IMR-90 (cell line): ENCODE measurements at regions of chr11 and their contacts with region 1.

Region 1: GRCh38 chr11:12411806-12412727 is 34.7 kb downstream of the PARVA start:
- DNase-seq: peak; percentile 95
- ATAC-seq: peak; percentile 80
- H3K4me3 ChIP-seq: peak overlapping the region; percentile 2; the same call in 1 of the 2 replicates
- H3K27ac ChIP-seq: peak overlapping the region; percentile 95
- H3K4me1 ChIP-seq: peaks cover 54% of the 10 kb centered on the region
- H3K27me3 ChIP-seq: no peaks in the 10 kb centered on the region
- CTCF ChIP-seq: peak; percentile 85
- POLR2A ChIP-seq: no peak
- RAD21 ChIP-seq: peak; percentile 84

Region 2: DNA sequence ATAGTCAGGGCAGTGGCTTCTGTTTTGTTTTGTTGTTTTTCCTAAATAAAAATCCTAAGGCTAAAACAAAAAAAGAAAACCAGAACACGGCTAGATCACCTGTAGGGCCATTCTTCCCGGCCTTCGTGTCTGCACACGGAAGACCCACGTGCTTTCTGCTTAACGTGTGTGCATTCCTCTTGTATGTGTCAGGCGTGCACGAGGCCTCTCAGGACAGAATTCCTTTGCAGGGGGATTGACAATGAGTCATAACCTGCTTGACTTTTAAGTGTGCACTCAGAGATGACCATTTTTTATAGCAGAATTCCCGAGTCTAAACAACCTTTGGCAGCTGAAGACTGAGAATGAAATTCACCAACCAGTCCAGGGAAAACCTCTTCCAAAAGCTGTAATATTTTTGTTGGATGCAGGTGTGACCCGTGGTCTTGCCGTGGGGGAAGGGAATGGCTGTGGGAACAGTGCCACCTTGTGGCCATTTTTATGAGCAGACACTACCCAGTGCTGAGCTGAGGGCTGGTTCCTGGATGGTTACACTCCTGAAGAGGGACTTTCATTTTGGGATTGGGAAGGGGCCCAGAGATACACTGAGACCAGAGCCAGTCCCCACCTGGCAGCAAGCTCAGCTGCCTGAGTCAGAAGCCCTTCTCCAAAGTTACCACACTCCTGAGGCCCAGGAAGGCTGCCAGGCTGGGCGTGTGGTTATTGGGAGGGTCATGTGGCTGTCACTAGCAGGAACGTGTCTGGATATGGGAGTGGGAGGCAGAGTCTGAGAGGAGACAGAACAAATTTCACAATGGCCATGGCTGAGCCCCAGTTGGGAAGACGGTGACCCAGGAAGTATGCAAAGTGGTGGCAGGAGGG is 367.9 kb before region 1 on chr11:
- CTCF ChIA-PET with region 1: no interaction called
- POLR2A ChIA-PET with region 1: no interaction called
- dilution Hi-C with region 1: no loop called
- in situ Hi-C with region 1: no loop called
- intact Hi-C with region 1: no loop called
- DNase-seq: peak; percentile 100
- ATAC-seq: peak; percentile 75
- H3K4me3 ChIP-seq: 0 out of 2 replicates have a peak overlapping the region, but pooled peaks have one; percentile 2
- H3K27ac ChIP-seq: peak overlapping the region; percentile 88
- H3K4me1 ChIP-seq: peaks cover 22% of the 10 kb centered on the region
- H3K27me3 ChIP-seq: no peaks in the 10 kb centered on the region
- CTCF ChIP-seq: peak; percentile 90
- POLR2A ChIP-seq: peak; percentile 50; the same call in 1 of the 2 replicates
- RAD21 ChIP-seq: peak; percentile 93

Region 3: GRCh38 chr11:12397931-12398334 is 14.1 kb before region 1 on chr11:
- CTCF ChIA-PET with region 1: interaction called, 4 read pairs
- POLR2A ChIA-PET with region 1: no interaction called
- dilution Hi-C with region 1: no loop called
- in situ Hi-C with region 1: no loop called
- intact Hi-C with region 1: loop called (anchors 1 kb)
- DNase-seq: peak; percentile 99
- ATAC-seq: peak; percentile 93
- H3K4me3 ChIP-seq: no peak overlapping the region
- H3K27ac ChIP-seq: peak overlapping the region; percentile 68
- H3K4me1 ChIP-seq: peaks cover 26% of the 10 kb centered on the region
- H3K27me3 ChIP-seq: no peaks in the 10 kb centered on the region
- CTCF ChIP-seq: no peak
- POLR2A ChIP-seq: no peak; the same call in 1 of the 2 replicates
- RAD21 ChIP-seq: no peak; the same call in 1 of the 2 replicates

Region 4: DNA sequence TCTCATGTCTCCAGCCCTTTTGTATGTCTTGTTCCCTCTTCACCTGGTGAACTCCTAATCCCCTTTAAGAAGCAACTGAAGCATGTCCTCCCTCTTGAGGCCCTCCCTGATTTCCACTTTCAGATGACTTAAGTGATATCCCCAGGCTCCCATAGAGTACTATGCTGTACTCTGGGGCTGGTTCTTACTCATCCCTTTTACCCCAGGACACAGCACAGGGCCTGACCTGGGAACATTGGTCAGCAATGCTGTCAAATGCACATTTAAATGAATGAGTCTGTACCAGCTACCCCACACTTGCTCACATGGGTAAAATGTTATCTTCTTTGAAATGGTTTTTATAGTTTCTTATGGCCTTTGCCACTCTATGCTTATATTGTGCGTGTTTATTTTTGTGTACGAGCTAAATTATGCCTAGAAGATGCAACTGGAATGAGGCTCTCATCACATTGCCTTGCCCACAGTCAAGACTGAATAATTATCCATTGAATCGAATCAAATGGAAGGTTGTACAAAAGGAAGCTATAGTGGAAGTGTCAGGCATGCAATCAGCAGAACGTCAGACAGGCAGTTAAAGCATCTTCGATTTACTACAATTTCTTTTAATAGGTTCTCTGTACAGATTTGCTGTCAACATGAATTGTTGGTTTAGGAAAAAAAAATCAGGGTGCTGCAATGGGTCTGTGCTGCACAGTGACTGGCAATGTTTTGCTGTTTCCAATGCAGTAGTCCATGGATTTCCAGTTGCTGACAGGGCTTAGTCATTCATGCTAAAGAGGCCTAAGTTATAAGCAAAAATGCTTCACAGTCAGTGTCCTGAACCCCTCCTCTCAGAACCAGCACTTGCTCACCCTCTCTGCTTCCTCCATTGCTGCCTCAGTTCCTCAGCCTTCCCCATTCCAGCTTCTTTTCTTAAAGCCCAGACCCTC is 44.8 kb after region 1 on chr11:
- CTCF ChIA-PET with region 1: no interaction called
- POLR2A ChIA-PET with region 1: no interaction called
- dilution Hi-C with region 1: no loop called
- in situ Hi-C with region 1: no loop called
- intact Hi-C with region 1: loop called (anchors 1 kb)
- DNase-seq: peak; percentile 81
- ATAC-seq: peak; percentile 73
- H3K4me3 ChIP-seq: no peak overlapping the region
- H3K27ac ChIP-seq: peak overlapping the region; percentile 62; the same call in 1 of the 2 replicates
- H3K4me1 ChIP-seq: peaks cover 43% of the 10 kb centered on the region
- H3K27me3 ChIP-seq: no peaks in the 10 kb centered on the region
- CTCF ChIP-seq: no peak
- POLR2A ChIP-seq: no peak
- RAD21 ChIP-seq: no peak

Region 5: GRCh38 chr11:12540913-12541582 is 129.0 kb after region 1 on chr11:
- CTCF ChIA-PET with region 1: no interaction called
- POLR2A ChIA-PET with region 1: no interaction called
- dilution Hi-C with region 1: no loop called
- in situ Hi-C with region 1: no loop called
- intact Hi-C with region 1: loop called (anchors 1 kb)
- DNase-seq: peak; percentile 94
- ATAC-seq: peak; percentile 71
- H3K4me3 ChIP-seq: no peak overlapping the region
- H3K27ac ChIP-seq: peak overlapping the region; percentile 95
- H3K4me1 ChIP-seq: peaks cover 45% of the 10 kb centered on the region
- H3K27me3 ChIP-seq: no peaks in the 10 kb centered on the region
- CTCF ChIP-seq: peak; percentile 42
- POLR2A ChIP-seq: no peak; the same call in 1 of the 2 replicates
- RAD21 ChIP-seq: peak; percentile 49

Region 6: DNA sequence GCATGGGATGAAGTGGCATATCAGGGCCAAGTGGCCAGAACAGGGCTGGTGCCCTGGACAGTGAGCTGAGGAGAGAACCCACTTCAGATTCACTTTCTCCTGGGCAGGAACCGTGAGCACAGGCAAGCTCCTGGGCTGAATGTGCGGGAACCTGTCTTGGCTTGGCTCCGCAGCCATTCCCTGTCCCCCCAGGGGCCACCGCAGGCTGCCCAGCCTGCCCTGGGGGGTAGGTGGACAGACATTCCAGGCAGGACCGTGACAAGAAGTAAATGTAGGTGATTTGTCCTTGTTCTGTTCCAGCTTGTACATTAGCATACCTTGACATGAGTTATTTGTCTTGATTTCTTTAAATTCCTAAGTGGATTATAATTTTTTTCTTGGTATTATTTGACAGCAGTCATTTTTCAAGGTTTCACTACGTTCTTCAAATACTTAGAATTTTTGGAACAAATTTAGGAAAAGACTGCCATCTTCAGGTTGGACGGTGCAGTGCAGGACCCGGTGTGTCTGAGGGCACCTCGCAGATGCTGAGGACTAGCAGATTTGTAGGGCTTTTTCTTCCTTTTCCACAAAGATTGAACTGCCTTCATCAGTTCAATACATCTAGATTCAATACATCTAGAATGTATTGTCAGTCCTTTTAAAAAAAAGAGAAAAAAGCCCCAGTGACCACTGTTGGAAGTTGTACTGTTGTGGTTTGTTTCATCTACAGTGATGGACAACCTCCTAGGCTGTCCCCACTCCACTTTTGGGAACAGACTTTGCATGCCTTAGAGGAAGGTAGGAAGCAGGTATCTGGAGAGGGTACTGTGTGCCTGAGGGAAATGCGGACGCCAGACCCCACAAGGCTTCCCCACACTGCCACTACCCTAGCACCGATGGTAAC is 482.0 kb after region 1 on chr11:
- CTCF ChIA-PET with region 1: no interaction called
- POLR2A ChIA-PET with region 1: no interaction called
- dilution Hi-C with region 1: no loop called
- in situ Hi-C with region 1: no loop called
- intact Hi-C with region 1: loop called (anchors 5 kb)
- DNase-seq: peak; percentile 52
- ATAC-seq: peak; percentile 68
- H3K4me3 ChIP-seq: no peak overlapping the region
- H3K27ac ChIP-seq: peak overlapping the region; percentile 56
- H3K4me1 ChIP-seq: peaks cover 25% of the 10 kb centered on the region
- H3K27me3 ChIP-seq: no peaks in the 10 kb centered on the region
- CTCF ChIP-seq: peak; percentile 83
- POLR2A ChIP-seq: no peak
- RAD21 ChIP-seq: peak; percentile 69